ENCODE measurements at regions of chr11 and their contacts with region 1.

Region 1: GRCh38 chr11:15208378-15209222 is 93.9 kb downstream of the INSC start:
- DNase-seq: peak; percentile 84
- H3K4me3 Mint-ChIP-seq: no peak overlapping the region
- H3K27ac Mint-ChIP-seq: no peak overlapping the region
- H3K4me1 Mint-ChIP-seq: no peaks in the 10 kb centered on the region
- H3K27me3 Mint-ChIP-seq: no peaks in the 10 kb centered on the region

Region 2: GRCh38 chr11:14789879-14790484 is 418.6 kb before region 1 on chr11:
- CTCF ChIA-PET with region 1: no interaction called
- intact Hi-C with region 1: loop called (anchors 2 kb)
- DNase-seq: no peak
- H3K4me3 Mint-ChIP-seq: no peak overlapping the region
- H3K27ac Mint-ChIP-seq: no peak overlapping the region
- H3K4me1 Mint-ChIP-seq: peaks cover 6% of the 10 kb centered on the region
- H3K27me3 Mint-ChIP-seq: no peaks in the 10 kb centered on the region

Region 3: DNA sequence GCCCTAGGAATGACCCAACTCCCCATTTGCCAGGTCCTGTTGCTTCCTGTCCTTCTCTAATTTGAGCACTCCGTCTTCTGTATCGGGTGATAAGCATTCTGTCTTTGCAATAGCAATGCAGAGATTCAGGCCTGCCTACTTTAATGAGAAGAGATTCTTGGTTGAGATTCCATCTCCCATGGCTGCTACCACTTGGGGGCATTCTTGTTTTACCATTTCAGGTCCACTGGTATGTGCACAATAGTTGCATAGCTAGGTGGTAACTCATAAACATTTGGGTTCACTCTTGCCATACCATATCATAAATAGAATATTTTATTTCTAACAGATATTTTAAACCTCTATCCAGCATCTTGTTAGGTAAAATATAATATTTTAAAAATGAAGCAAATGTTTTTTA is 169.6 kb before region 1 on chr11:
- CTCF ChIA-PET with region 1: interaction called, 8 read pairs
- intact Hi-C with region 1: loop called (anchors 1 kb)
- DNase-seq: peak; percentile 57
- H3K4me3 Mint-ChIP-seq: no peak overlapping the region
- H3K27ac Mint-ChIP-seq: no peak overlapping the region
- H3K4me1 Mint-ChIP-seq: no peaks in the 10 kb centered on the region
- H3K27me3 Mint-ChIP-seq: no peaks in the 10 kb centered on the region

Region 4: GRCh38 chr11:15101072-15101709 is 107.4 kb before region 1 on chr11:
- CTCF ChIA-PET with region 1: interaction called, 62 read pairs
- intact Hi-C with region 1: loop called (anchors 1 kb)
- DNase-seq: peak; percentile 71
- H3K4me3 Mint-ChIP-seq: no peak overlapping the region
- H3K27ac Mint-ChIP-seq: no peak overlapping the region
- H3K4me1 Mint-ChIP-seq: no peaks in the 10 kb centered on the region
- H3K27me3 Mint-ChIP-seq: peaks cover 10% of the 10 kb centered on the region

Region 5: DNA sequence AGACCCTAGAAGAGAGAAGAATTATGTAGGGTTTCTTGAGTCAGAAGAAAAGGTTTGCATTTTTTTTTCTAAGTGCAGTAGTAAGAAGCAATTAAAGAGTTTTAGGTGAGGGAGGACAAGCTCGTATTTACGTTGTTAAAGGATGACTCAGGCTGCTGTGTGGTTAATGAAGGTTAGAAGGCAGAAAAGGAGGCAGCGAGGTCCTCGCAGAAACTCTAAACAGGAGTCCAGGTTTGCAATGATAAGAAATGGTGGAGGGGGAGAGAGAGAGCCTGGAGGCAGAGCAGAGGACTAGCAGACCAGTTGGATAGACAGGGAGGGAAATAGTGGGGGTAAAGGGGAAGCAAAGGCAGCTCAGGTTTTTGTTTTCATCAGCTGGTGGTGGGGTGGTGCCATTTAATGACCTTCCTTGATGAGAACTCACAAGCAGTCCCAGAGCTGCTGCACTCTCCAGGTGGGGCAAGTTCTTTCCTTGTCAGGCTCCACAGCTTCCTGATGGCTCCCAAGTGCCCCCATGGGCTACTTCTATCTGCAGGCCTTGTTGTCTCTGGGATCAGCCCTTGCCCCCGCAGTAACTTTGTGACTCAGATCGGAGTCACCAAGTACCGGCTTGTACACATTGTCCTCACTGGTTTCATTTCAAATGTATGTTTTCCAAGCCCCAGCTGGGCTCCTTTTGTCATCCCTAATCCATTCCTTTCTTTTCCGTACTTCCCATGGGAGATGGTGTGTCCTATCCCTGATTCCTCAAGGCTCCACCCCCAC is 102.2 kb before region 1 on chr11:
- CTCF ChIA-PET with region 1: interaction called, 62 read pairs
- intact Hi-C with region 1: loop called (anchors 1 kb)
- DNase-seq: no peak
- H3K4me3 Mint-ChIP-seq: no peak overlapping the region
- H3K27ac Mint-ChIP-seq: no peak overlapping the region
- H3K4me1 Mint-ChIP-seq: no peaks in the 10 kb centered on the region
- H3K27me3 Mint-ChIP-seq: no peaks in the 10 kb centered on the region

Region 6: DNA sequence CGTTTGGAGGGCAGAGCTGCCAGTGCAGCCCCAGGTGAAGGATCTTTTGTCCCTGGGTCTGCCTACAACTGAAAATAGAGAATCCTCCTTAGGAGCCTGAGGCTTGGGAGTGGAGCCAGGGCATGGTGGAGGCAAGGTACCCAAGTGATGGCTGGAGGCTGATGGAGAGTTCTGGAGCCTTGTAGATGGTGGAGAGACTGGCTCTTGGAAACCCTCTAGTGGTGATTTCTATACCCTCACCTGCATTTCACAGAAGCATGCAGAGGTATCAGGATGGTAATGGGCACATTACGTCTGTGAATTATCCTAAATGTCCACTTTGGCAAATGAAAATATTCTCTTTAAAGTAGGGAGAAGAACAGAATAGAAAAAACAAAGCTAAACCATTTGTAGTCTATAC is 49.5 kb before region 1 on chr11:
- CTCF ChIA-PET with region 1: no interaction called
- intact Hi-C with region 1: loop called (anchors 5 kb)
- DNase-seq: no peak
- H3K4me3 Mint-ChIP-seq: no peak overlapping the region
- H3K27ac Mint-ChIP-seq: no peak overlapping the region
- H3K4me1 Mint-ChIP-seq: no peaks in the 10 kb centered on the region
- H3K27me3 Mint-ChIP-seq: no peaks in the 10 kb centered on the region

Region 7: DNA sequence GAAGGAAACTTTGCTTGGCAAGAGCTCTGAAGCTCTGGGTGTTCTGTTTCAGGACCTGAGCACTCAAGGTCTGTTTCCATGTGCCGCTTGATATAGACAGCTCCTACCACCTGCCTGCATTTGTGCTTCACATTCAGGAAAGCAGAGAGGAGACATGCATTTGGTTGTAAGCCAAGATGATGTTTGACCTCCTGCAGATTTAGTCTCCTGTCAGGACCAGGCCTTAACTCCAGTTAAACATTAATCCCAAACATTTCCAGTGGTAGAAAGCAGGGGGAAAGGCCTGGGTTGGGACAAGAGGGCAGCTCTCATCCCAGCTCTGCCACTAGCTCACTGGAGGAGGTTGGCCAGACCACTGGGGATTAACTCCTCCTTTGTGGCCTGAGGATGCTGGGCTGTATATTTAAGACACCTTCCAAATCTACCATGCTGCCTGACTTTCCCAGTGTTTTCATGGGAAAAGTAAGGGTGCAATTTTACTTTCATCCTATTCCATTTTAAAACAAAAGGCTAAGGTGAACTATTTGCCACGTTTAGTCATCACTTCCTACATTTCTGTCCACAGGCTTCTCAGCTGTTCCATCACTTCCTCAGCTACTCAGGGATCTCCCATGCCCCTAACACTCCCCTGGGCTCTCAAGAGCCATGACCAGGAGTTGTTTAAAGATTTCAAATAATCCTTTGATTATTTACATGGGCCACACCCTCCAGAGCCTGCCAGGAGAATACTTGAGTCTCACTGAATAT is 13.0 kb before region 1 on chr11:
- CTCF ChIA-PET with region 1: interaction called, 10 read pairs
- intact Hi-C with region 1: no loop called
- DNase-seq: no peak
- H3K4me3 Mint-ChIP-seq: no peak overlapping the region
- H3K27ac Mint-ChIP-seq: no peak overlapping the region
- H3K4me1 Mint-ChIP-seq: no peaks in the 10 kb centered on the region
- H3K27me3 Mint-ChIP-seq: no peaks in the 10 kb centered on the region

Measured in activated naive CD4-positive, alpha-beta T cell treated with anti-CD3 and anti-CD28 coated beads for 36 hours (primary cell).